ENCODE measurements at regions of chr5 and their contacts with region 1.

Region 1: GRCh38 chr5:163564321-163564938 is 59.0 kb downstream of the MAT2B start:
- DNase-seq: peak; percentile 63
- H3K4me3 ChIP-seq: no peak overlapping the region
- H3K27ac ChIP-seq: no peak overlapping the region
- H3K4me1 ChIP-seq: peaks cover 17% of the 10 kb centered on the region
- H3K27me3 ChIP-seq: peaks cover 43% of the 10 kb centered on the region
- CTCF ChIP-seq: peak; percentile 81

Region 2: DNA sequence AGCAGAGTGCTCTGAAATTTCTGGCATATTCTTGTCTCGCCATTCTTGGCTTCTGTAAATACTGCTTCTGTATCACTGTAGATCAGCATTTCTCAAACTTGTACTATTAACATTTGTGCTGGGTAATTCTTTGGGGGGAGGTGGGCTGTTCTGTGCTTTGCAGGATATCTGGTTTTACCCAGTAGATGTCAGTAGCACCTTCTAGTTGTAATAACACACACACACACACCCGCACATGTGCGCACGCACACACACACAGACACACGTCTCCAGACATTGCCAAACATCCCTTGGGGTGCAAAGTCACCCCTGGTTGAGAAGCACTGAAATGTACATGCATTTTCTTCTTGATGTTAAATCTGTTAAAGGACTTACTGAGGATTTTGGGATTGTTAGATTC is 245.0 kb after region 1 on chr5:
- CTCF ChIA-PET with region 1: no interaction called
- POLR2A ChIA-PET with region 1: no interaction called
- intact Hi-C with region 1: loop called (anchors 10 kb)
- DNase-seq: no peak
- H3K4me3 ChIP-seq: no peak overlapping the region
- H3K27ac ChIP-seq: no peak overlapping the region
- H3K4me1 ChIP-seq: no peaks in the 10 kb centered on the region
- H3K27me3 ChIP-seq: no peaks in the 10 kb centered on the region
- CTCF ChIP-seq: no peak

Region 3: GRCh38 chr5:163995206-163995605 is 430.8 kb after region 1 on chr5:
- CTCF ChIA-PET with region 1: no interaction called
- POLR2A ChIA-PET with region 1: no interaction called
- intact Hi-C with region 1: no loop called
- DNase-seq: no peak
- H3K4me3 ChIP-seq: no peak overlapping the region
- H3K27ac ChIP-seq: no peak overlapping the region
- H3K4me1 ChIP-seq: no peaks in the 10 kb centered on the region
- H3K27me3 ChIP-seq: no peaks in the 10 kb centered on the region
- CTCF ChIP-seq: no peak

Region 4: GRCh38 chr5:164504141-164504772 is 939.8 kb after region 1 on chr5:
- CTCF ChIA-PET with region 1: interaction called, 4 read pairs
- POLR2A ChIA-PET with region 1: no interaction called
- intact Hi-C with region 1: loop called (anchors 1 kb)
- DNase-seq: peak; percentile 44
- H3K4me3 ChIP-seq: no peak overlapping the region
- H3K27ac ChIP-seq: no peak overlapping the region
- H3K4me1 ChIP-seq: no peaks in the 10 kb centered on the region
- H3K27me3 ChIP-seq: peaks cover 15% of the 10 kb centered on the region
- CTCF ChIP-seq: peak; percentile 75

Region 5: GRCh38 chr5:165209086-165209727 is 1644.8 kb after region 1 on chr5:
- CTCF ChIA-PET with region 1: no interaction called
- POLR2A ChIA-PET with region 1: no interaction called
- intact Hi-C with region 1: loop called (anchors 5 kb)
- DNase-seq: peak; percentile 33
- H3K4me3 ChIP-seq: no peak overlapping the region
- H3K27ac ChIP-seq: no peak overlapping the region
- H3K4me1 ChIP-seq: no peaks in the 10 kb centered on the region
- H3K27me3 ChIP-seq: no peaks in the 10 kb centered on the region
- CTCF ChIP-seq: peak; percentile 68